Transverse colon (tissue), 4 donors: ENCODE measurements at regions of chr18 and their contacts with region 1.

Region 1: DNA sequence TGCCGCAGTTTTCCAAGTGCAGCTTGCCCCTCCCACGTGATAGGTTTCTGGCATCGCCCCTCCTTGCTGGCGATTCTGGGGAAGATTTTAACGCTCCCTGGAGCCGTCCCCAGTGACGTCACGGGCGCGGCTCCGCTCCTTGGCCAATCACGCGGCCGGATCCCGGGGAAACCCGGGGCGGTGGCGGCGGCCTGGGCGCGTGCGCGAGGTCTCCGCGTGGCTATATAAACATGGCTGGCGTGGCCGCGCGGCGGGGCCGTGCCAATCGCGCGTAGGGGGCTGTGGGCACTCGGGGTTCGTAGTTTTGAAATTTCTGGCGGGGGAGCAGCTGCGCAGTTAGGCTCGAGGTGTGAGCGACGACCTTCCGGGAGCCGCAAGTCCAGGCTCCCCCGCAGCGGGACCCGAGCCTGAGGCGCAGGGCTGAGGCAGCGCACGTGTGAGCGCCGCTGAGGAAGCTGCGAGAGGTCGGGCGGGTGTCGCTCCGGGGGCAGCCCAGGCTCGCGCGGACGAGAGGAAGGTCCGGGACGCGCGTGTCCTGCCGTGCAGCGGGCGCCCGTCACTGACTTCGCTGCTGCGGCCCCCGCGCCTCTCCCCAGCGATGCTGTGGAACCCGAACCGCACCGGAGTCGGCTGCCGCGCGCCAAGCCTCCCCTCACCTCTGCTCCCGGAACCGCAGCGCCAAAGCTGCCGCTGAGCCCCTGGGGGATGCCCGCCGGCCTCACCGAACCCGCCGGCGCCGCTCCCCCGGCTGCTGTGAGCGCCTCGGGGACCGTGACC is at the start of gene TAF4B:
- DNase-seq: peak; percentile 95
- H3K4me3 ChIP-seq: peak within 1 kb of the TSS; percentile 67 to 90 (median 77)
- H3K27ac ChIP-seq: peak within 1 kb of the TSS; percentile 77 to 88 (median 79)
- H3K4me1 ChIP-seq: peaks cover 0 to 26% (median 8%) of the 10 kb centered on the region in 4 donors
- H3K27me3 ChIP-seq: no peaks in the 10 kb centered on the region
- CTCF ChIP-seq: no peak
- EP300 ChIP-seq: no peak
- POLR2A ChIP-seq: peak; percentile 59
- total RNA-seq, gene TAF4B: 3.7 to 11.9 (median 7.1) TPM

Region 2: GRCh38 chr18:26017929-26018328 is 208.5 kb before region 1 on chr18:
- in situ Hi-C with region 1: loop called in 1 of 4 experiments (anchors 25 kb)
- intact Hi-C with region 1: no loop called
- DNase-seq: no peak
- H3K4me3 ChIP-seq: no peak overlapping the region
- H3K27ac ChIP-seq: no peak overlapping the region
- H3K4me1 ChIP-seq: no peaks in the 10 kb centered on the region
- H3K27me3 ChIP-seq: no peaks in the 10 kb centered on the region
- CTCF ChIP-seq: no peak
- EP300 ChIP-seq: no peak
- POLR2A ChIP-seq: no peak